Left ventricle myocardium inferior (tissue), 1 donor: ENCODE measurements at regions of chr1 and their contacts with region 1.

Region 1: DNA sequence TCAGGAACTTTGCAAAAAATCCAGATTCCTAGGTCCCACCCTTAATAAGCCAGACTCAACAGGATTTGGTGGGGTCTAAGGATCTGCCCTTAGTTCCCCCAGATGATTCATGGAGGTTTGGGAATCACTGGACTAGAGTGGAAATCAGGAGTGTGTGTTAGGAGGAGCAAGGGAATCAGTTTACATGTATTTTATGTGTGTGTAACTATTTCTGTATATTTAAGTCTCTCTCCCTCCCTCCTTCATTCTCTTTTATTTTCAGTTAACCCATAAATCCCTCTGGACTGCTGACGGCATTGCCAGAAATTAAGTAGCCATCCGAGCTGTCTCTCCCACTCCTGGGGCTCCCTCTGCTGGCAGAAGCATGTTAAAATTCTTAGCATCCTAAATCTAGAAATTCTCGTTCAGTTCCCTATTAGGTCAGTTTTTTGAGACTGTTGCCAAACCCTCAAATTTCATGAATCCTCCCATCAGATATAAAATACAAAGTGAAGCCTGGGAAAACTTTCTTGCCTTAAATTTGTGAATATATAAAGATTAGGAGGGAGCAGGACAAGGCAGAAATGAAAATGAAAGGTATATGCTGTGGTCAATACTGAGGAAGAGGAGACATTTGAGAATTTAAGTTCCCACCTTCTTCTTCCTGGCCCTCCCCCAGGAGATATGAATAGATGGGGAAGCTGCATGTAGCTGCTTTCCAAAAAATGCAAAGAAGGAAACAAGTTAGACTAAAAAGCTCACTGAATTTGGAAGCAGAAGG is 11.7 kb upstream of the HSD11B1 start:
- DNase-seq: peak; percentile 68
- H3K4me3 ChIP-seq: no peak overlapping the region
- H3K27ac ChIP-seq: peak overlapping the region; percentile 41
- H3K4me1 ChIP-seq: peaks cover 32% of the 10 kb centered on the region
- H3K27me3 ChIP-seq: no peaks in the 10 kb centered on the region
- CTCF ChIP-seq: peak; percentile 88

Region 2: DNA sequence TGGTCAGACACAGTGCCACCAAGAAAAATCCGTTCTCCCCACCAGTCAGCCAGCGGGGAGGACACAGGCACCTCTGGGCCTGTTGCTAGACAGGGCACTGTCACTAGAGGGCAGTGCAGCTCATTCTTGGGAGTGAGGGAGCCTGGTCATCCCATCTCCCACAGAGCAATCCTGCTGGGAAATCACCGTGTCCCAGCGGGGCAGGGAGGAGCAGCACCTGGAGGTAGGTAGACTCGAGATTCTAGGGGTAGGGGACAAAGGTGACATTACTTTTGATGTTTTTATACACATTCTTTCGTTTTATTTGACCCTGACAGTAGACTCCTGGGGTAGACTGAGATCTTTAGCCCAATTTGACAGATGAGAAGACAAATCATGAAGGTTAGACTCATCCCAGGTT is 116.1 kb before region 1 on chr1:
- intact Hi-C with region 1: loop called (anchors 5 kb)
- DNase-seq: peak; percentile 76
- H3K4me3 ChIP-seq: no peak overlapping the region
- H3K27ac ChIP-seq: no peak overlapping the region
- H3K4me1 ChIP-seq: no peaks in the 10 kb centered on the region
- H3K27me3 ChIP-seq: peaks cover 38% of the 10 kb centered on the region
- CTCF ChIP-seq: peak; percentile 98

Region 3: GRCh38 chr1:209747580-209748262 is 54.8 kb after region 1 on chr1:
- intact Hi-C with region 1: loop called (anchors 10 kb)
- DNase-seq: peak; percentile 87
- H3K4me3 ChIP-seq: peak overlapping the region; percentile 49
- H3K27ac ChIP-seq: peak overlapping the region; percentile 90
- H3K4me1 ChIP-seq: peaks cover 35% of the 10 kb centered on the region
- H3K27me3 ChIP-seq: no peaks in the 10 kb centered on the region
- CTCF ChIP-seq: peak; percentile 87

Region 4: DNA sequence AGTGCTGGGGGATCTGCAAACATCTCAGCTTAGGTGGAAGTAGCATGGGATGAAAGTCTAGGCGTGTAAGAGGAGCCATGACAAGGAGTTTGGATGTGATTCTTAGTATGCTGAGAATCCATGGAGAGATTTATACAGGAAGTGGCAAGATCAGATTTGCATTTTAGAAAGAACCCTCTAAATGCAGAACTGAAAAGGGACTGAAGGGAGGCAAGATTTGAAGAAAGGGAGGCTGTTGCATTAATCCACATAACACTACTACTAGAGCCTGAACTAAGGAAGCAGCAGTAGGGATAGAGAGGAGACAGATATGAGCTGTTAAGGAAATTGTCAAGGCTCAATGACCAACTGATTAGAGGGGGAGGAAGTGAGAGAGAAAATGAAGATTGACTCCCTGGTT is 81.7 kb after region 1 on chr1:
- intact Hi-C with region 1: no loop called
- DNase-seq: no peak
- H3K4me3 ChIP-seq: no peak overlapping the region
- H3K27ac ChIP-seq: no peak overlapping the region
- H3K4me1 ChIP-seq: peaks cover 7% of the 10 kb centered on the region
- H3K27me3 ChIP-seq: no peaks in the 10 kb centered on the region
- CTCF ChIP-seq: no peak